ENCODE measurements at regions of chr2 and their contacts with region 1.

Region 1: DNA sequence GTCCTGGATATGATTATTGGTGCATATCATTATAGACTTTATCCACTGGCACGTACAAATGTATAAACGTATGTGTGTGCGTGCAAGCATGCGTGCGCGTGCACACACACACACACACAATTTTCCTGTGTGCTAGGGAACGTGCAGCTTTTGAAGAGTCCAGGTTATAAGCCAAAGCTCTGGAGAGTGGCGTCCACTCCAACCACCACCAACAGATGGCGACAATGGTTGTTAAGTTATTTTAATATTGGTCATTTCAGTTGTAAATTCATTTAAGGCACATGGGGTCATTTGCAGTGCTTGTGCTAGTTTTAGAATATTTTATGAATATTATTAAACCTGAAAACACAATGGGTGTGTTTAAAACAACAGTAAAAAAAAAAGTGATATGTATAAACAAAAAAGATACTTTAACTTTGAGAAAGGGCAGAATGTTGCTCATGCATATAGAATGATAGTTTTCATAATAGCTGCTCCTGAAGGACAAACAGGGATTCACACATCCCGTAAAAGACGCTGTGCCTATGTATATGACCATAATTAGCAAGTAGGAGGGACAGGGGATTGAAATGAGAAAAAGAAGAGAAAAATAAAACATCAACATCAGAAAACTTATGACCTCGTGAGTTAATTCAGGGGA is 124.2 kb upstream of the ITGB6 start:
- DNase-seq: peak in 4 of 5 donors; percentile 51 to 56 (median 54)
- ATAC-seq: peak in 3 of 4 donors; percentile 33 to 54 (median 43)
- H3K4me3 ChIP-seq: no peak overlapping the region
- H3K27ac ChIP-seq: peak overlapping the region in 2 of 12 donors; percentile 32 to 46
- H3K4me1 ChIP-seq: peaks cover 0 to 96% (median 77%) of the 10 kb centered on the region in 12 donors
- H3K27me3 ChIP-seq: no peaks in the 10 kb centered on the region
- CTCF ChIP-seq: peak; percentile 39 to 87 (median 76)
- POLR2A ChIP-seq: no peak

Region 2: DNA sequence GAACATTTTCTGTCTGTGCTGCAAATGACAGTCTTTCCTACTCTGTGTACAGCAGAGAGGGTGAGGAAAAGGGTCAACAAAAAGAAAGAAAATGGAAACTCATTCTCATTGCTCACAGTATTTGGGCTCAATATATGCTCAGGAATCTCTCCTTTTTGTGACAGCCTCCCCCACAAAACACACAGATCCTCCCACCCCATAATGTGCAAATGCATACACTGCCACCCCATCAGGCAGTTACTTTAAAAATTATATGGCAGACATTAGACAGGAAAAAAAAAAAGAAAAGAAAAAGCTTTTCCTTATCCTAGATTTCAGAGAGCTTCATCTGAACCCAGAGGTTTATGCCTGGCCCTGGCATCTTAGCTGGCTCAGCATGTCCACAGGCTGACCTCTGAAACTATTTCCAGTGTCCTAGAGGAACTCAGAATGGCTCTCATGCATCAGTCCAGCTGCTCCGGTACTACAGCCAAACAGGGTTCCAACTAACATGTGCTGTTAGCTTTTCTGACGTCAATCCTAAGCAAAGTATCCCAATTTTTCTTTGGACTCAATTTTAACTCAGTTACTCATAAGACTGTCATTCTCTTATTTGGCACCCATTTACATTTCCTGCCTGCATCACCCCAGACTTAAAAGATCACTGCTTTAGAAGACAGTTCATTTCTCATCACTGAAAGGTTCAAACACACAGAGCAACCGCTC is 63.4 kb after region 1 on chr2:
- intact Hi-C with region 1: loop called in 1 of 10 experiments (anchors 5 kb)
- DNase-seq: peak; percentile 61 to 88 (median 78)
- ATAC-seq: peak; percentile 90 to 96 (median 94)
- H3K4me3 ChIP-seq: peak overlapping the region in 5 of 12 donors; percentile 6 to 18 (median 13)
- H3K27ac ChIP-seq: peak overlapping the region; percentile 76 to 93 (median 89)
- H3K4me1 ChIP-seq: peaks cover 10 to 97% (median 77%) of the 10 kb centered on the region in 12 donors
- H3K27me3 ChIP-seq: no peaks in the 10 kb centered on the region
- CTCF ChIP-seq: no peak
- POLR2A ChIP-seq: no peak

Region 3: GRCh38 chr2:160406591-160407392 is 82.5 kb after region 1 on chr2:
- intact Hi-C with region 1: loop called in 5 of 10 experiments (anchors 5 to 10 kb)
- DNase-seq: peak; percentile 60 to 64 (median 61)
- ATAC-seq: peak; percentile 25 to 58 (median 38)
- H3K4me3 ChIP-seq: peak overlapping the region; percentile 81 to 96 (median 90)
- H3K27ac ChIP-seq: peak overlapping the region; percentile 89 to 99 (median 95)
- H3K4me1 ChIP-seq: peaks cover 8 to 81% (median 70%) of the 10 kb centered on the region in 12 donors
- H3K27me3 ChIP-seq: no peaks in the 10 kb centered on the region
- CTCF ChIP-seq: no peak
- POLR2A ChIP-seq: peak in 1 of 2 donors; percentile 34

Region 4: GRCh38 chr2:160429248-160430000 is 105.1 kb after region 1 on chr2:
- intact Hi-C with region 1: loop called in 2 of 10 experiments (anchors 5 to 10 kb)
- DNase-seq: no peak
- ATAC-seq: peak in 1 of 4 donors; percentile 40
- H3K4me3 ChIP-seq: no peak overlapping the region
- H3K27ac ChIP-seq: peak overlapping the region in 10 of 12 donors; percentile 38 to 82 (median 75)
- H3K4me1 ChIP-seq: peaks cover 0 to 70% (median 53%) of the 10 kb centered on the region in 12 donors
- H3K27me3 ChIP-seq: no peaks in the 10 kb centered on the region
- CTCF ChIP-seq: peak; percentile 42 to 70 (median 60)
- POLR2A ChIP-seq: no peak

Region 5: DNA sequence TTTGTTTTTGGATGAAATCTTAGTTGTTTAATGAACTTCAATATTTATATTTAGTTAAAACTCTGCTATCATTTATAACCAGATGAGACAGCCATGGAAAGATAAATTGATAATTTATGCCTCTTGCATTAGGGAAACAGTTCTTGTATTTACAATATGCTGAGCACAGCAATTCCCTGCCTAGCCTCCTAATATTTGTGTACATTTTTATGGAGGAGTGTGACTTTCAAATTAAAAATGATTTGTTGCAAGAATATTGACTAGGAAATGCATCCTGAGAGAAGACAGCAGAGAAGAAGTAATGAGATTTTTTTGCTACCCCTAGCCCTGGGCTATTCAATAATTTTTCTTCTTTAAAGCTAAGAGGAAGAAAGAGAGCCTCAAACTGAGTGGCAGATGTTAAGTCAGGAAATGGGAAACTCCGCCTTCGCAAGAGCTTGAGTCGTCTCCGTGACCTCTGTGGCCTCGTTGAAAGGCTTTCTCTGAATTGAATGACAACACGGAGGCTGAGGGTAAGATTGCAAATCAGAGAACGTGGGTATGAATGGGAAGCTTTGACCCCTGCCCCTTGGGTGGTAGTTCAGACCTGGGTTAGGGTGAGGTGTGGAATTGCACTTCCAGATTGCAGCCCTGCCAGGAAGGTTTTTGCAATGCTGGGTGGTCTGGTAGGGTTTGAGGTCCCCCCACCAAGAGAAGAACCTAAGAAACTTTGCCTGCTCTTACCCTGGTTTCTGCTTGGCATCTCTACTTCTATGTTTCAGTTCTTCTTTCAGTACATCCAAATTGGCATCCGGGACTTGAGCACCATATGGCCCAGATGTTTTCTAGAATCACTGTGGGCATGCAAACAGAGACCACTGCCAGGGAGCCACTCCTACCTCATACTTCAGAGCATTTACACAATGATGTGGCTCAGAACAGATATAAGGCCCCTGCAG is 379.6 kb after region 1 on chr2:
- intact Hi-C with region 1: no loop called
- DNase-seq: peak in 2 of 5 donors; percentile 10 to 27
- ATAC-seq: peak in 2 of 4 donors; percentile 22 to 47
- H3K4me3 ChIP-seq: no peak overlapping the region
- H3K27ac ChIP-seq: peak overlapping the region in 1 of 12 donors; percentile 61
- H3K4me1 ChIP-seq: peaks cover 0 to 11% (median 0%) of the 10 kb centered on the region in 12 donors
- H3K27me3 ChIP-seq: no peaks in the 10 kb centered on the region
- CTCF ChIP-seq: no peak
- POLR2A ChIP-seq: no peak

Region 6: DNA sequence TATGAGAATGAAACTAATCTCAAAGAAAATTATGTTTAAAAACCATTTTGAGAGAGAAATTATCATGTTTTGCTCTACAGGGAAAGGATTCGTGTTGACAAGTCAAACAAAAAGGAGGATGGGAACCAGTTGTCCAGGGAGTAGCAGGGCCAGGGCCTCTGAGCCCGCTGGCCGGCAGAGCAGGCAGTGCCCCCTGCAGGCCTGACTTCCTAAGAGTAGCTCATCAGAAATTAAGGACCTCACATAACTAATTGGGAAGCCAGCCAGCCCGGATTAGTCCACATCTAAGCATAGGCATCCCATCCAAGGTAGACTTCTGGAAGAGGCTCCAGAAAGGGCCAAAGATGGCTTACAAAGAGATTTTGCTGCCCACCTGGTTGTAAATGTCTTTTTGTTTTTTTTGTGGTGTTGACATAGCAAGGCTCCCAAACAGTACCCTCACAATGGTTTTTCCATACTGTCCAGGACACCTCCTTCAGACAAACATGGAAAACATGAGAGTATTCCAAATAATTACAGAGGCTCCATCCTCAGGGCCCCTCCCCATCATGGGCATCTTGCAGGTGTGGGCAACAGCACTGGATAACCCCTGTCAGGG is 594.7 kb after region 1 on chr2:
- intact Hi-C with region 1: loop called in 5 of 10 experiments (anchors 10 kb)
- DNase-seq: peak; percentile 67 to 83 (median 74)
- ATAC-seq: peak; percentile 85 to 91 (median 90)
- H3K4me3 ChIP-seq: no peak overlapping the region
- H3K27ac ChIP-seq: peak overlapping the region in 3 of 12 donors; percentile 6 to 31 (median 17)
- H3K4me1 ChIP-seq: peaks cover 0 to 45% (median 18%) of the 10 kb centered on the region in 12 donors
- H3K27me3 ChIP-seq: no peaks in the 10 kb centered on the region
- CTCF ChIP-seq: peak; percentile 47 to 75 (median 66)
- POLR2A ChIP-seq: no peak

Region 7: GRCh38 chr2:160970052-160970965 is 646.0 kb after region 1 on chr2:
- intact Hi-C with region 1: loop called in 9 of 10 experiments (anchors 5 to 10 kb)
- DNase-seq: peak in 2 of 5 donors; percentile 29 to 30
- ATAC-seq: peak in 3 of 4 donors; percentile 58 to 75 (median 69)
- H3K4me3 ChIP-seq: peak overlapping the region in 9 of 12 donors; percentile 17 to 38 (median 29)
- H3K27ac ChIP-seq: peak overlapping the region in 11 of 12 donors; percentile 22 to 76 (median 63)
- H3K4me1 ChIP-seq: peaks cover 0 to 23% (median 10%) of the 10 kb centered on the region in 12 donors
- H3K27me3 ChIP-seq: no peaks in the 10 kb centered on the region
- CTCF ChIP-seq: peak; percentile 63 to 87 (median 80)
- POLR2A ChIP-seq: no peak

Region 8: DNA sequence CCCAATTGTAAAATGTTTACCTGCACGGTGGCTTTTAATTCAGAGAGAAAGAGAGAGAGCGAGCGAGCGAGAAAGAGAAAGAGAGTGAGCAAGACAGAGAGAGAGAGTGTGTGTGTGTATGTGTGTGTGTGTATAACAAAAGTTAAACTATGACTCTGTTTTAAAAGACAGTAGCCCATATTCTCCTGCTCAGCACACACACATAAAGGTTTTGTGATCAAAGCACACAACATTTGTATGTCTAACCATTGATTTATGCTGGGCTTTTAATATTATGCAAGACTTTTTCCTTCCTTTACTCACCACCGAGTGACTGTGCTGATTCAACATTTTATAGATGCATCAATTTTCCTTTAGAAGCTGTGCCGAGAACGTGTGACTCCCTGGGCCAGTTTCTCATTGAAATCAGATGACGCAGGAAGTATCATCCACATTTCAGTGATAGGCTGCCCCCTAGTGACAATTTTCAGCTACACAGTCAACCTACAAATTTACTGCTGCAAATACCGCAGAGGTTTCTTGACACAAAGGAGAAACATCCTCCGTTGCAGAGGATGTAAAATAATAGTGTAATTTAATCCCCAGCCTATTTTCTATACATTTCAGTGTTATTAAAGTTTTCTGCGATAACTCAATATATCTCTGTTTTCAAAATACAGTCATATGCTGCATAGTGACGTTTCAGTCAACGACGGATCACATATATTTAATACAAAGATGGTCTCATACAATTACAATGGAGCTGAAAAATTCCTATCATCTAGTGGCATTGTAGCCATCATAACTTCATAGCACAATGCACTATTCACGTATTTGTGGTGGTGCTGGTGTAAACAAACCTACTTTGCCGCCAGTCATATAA is 670.1 kb after region 1 on chr2:
- intact Hi-C with region 1: loop called in 2 of 10 experiments (anchors 5 to 10 kb)
- DNase-seq: peak in 4 of 5 donors; percentile 60 to 75 (median 66)
- ATAC-seq: peak; percentile 82 to 90 (median 88)
- H3K4me3 ChIP-seq: peak overlapping the region in 3 of 12 donors; percentile 1 to 22 (median 19)
- H3K27ac ChIP-seq: peak overlapping the region in 9 of 12 donors; percentile 20 to 75 (median 57)
- H3K4me1 ChIP-seq: peaks cover 0 to 16% (median 6%) of the 10 kb centered on the region in 12 donors
- H3K27me3 ChIP-seq: no peaks in the 10 kb centered on the region
- CTCF ChIP-seq: peak; percentile 78 to 93 (median 83)
- POLR2A ChIP-seq: no peak